Naive thymus-derived CD4-positive, alpha-beta T cell (primary cell): ENCODE measurements at regions of chr3 and their contacts with region 1.

Region 1: GRCh38 chr3:190696777-190697501 is 165.6 kb downstream of the GMNC start:
- DNase-seq: no peak
- ATAC-seq: no peak
- H3K4me3 ChIP-seq: no peak overlapping the region
- H3K4me3 Mint-ChIP-seq: no peak overlapping the region
- H3K27ac ChIP-seq: no peak overlapping the region
- H3K27ac Mint-ChIP-seq: no peak overlapping the region
- H3K4me1 ChIP-seq: no peaks in the 10 kb centered on the region
- H3K4me1 Mint-ChIP-seq: peaks cover 0 to 8% (median 0%) of the 10 kb centered on the region in 7 donors
- H3K27me3 ChIP-seq: no peaks in the 10 kb centered on the region
- H3K27me3 Mint-ChIP-seq: peaks cover 14 to 46% (median 22%) of the 10 kb centered on the region in 5 donors

Region 2: DNA sequence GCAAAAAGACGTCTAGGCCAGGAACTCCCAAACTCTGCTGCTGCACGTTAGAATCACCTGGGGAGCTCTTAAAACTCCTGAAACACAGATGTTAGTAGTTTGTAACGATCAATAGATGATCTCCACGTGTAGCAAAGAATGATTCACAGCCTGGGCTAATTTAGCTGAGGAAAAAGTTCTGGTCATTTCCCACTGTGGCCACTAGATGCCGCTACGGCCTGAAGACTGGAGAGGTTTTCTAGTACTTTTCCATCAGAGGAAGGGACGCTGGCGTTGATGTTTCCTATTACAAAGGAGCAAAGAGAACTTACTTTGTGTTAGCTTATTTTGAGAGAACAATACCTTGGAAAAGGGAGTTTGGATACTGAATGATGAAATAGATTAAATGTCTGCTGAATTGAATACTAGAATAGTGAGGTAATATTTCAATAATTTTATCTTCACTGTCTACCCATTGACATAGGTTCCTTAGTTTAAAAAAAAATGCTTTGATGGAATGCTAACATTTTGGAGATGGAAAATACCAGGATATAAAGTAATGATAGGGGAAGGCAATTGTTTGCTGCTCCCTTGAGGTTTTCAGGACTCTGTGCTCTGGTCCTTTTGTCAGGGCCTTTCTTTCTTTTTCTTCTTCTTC is 735.3 kb before region 1 on chr3:
- CTCF ChIA-PET with region 1: no interaction called
- POLR2A ChIA-PET with region 1: no interaction called
- intact Hi-C with region 1: loop called (anchors 2 to 5 kb)
- DNase-seq: peak in 8 of 9 donors; percentile 31 to 67 (median 44)
- ATAC-seq: peak; percentile 80
- H3K4me3 ChIP-seq: no peak overlapping the region
- H3K4me3 Mint-ChIP-seq: peak overlapping the region in 1 of 10 donors; percentile 29
- H3K27ac ChIP-seq: no peak overlapping the region
- H3K27ac Mint-ChIP-seq: no peak overlapping the region
- H3K4me1 ChIP-seq: no peaks in the 10 kb centered on the region
- H3K4me1 Mint-ChIP-seq: peaks cover 2 to 10% (median 6%) of the 10 kb centered on the region in 7 donors
- H3K27me3 ChIP-seq: no peaks in the 10 kb centered on the region
- H3K27me3 Mint-ChIP-seq: peaks cover 7 to 19% (median 15%) of the 10 kb centered on the region in 5 donors

Region 3: GRCh38 chr3:189967254-189967865 is 729.6 kb before region 1 on chr3:
- CTCF ChIA-PET with region 1: no interaction called
- POLR2A ChIA-PET with region 1: no interaction called
- intact Hi-C with region 1: loop called (anchors 2 to 5 kb)
- DNase-seq: peak in 6 of 9 donors; percentile 13 to 47 (median 33)
- ATAC-seq: no peak
- H3K4me3 ChIP-seq: no peak overlapping the region
- H3K4me3 Mint-ChIP-seq: no peak overlapping the region
- H3K27ac ChIP-seq: no peak overlapping the region
- H3K27ac Mint-ChIP-seq: no peak overlapping the region
- H3K4me1 ChIP-seq: no peaks in the 10 kb centered on the region
- H3K4me1 Mint-ChIP-seq: peaks cover 0 to 4% (median 0%) of the 10 kb centered on the region in 7 donors
- H3K27me3 ChIP-seq: no peaks in the 10 kb centered on the region
- H3K27me3 Mint-ChIP-seq: peaks cover 0 to 9% (median 5%) of the 10 kb centered on the region in 5 donors

Region 4: DNA sequence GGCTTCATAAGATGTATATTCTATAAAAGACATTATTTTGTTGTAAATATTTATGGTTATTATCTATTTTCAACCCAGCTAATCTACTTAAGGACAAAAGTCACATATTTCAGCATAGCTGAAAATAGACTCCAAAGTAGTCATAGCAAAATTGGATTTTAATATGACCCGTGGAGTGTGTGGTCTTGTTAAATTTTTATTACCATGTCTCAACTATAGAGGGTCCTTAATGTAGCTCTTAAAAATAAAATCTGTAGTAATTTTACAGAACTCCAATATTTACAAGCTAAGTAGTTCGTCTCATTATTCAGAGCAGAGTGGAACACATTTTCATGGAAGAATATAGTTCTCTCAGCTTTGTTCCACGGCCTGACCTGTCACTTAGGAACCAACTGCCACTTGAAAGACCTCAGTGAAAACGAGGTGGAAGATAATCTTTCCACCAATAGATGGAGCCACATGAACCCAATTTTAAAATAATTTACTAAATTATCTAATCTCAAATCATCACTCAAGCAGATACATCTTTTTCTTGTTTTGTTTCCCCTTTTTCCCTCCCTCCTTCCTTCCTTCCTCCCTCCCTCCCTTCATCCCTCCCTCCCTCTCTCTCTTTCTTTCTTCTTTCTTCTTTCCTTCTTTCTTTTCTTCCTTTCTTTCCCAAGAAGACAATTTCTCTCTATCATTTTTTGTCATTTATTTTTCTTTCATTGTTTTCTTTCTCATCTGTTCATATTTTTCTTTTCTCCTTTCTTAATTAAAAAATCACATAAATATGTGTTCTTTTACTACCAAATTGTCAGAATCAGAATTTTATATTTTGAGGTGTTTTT is 471.9 kb before region 1 on chr3:
- CTCF ChIA-PET with region 1: interaction called, 3 read pairs
- POLR2A ChIA-PET with region 1: no interaction called
- intact Hi-C with region 1: loop called in 1 of 2 experiments (anchors 5 kb)
- DNase-seq: peak in 6 of 9 donors; percentile 5 to 40 (median 26)
- ATAC-seq: no peak
- H3K4me3 ChIP-seq: no peak overlapping the region
- H3K4me3 Mint-ChIP-seq: no peak overlapping the region
- H3K27ac ChIP-seq: no peak overlapping the region
- H3K27ac Mint-ChIP-seq: no peak overlapping the region
- H3K4me1 ChIP-seq: no peaks in the 10 kb centered on the region
- H3K4me1 Mint-ChIP-seq: no peaks in the 10 kb centered on the region
- H3K27me3 ChIP-seq: no peaks in the 10 kb centered on the region
- H3K27me3 Mint-ChIP-seq: peaks cover 0 to 6% (median 5%) of the 10 kb centered on the region in 5 donors

Region 5: GRCh38 chr3:190384241-190384863 is 312.6 kb before region 1 on chr3:
- CTCF ChIA-PET with region 1: no interaction called
- POLR2A ChIA-PET with region 1: no interaction called
- intact Hi-C with region 1: loop called in 1 of 2 experiments (anchors 5 kb)
- DNase-seq: no peak
- ATAC-seq: no peak
- H3K4me3 ChIP-seq: no peak overlapping the region
- H3K4me3 Mint-ChIP-seq: no peak overlapping the region
- H3K27ac ChIP-seq: no peak overlapping the region
- H3K27ac Mint-ChIP-seq: no peak overlapping the region
- H3K4me1 ChIP-seq: no peaks in the 10 kb centered on the region
- H3K4me1 Mint-ChIP-seq: no peaks in the 10 kb centered on the region
- H3K27me3 ChIP-seq: peaks cover 0 to 1% of the 10 kb centered on the region in 2 donors
- H3K27me3 Mint-ChIP-seq: peaks cover 4 to 24% (median 12%) of the 10 kb centered on the region in 5 donors

Region 6: GRCh38 chr3:190566043-190566933 is 130.7 kb before region 1 on chr3:
- CTCF ChIA-PET with region 1: no interaction called
- POLR2A ChIA-PET with region 1: no interaction called
- intact Hi-C with region 1: no loop called
- DNase-seq: peak in 2 of 9 donors; percentile 9 to 73
- ATAC-seq: peak; percentile 89
- H3K4me3 ChIP-seq: no peak overlapping the region
- H3K4me3 Mint-ChIP-seq: peak overlapping the region in 1 of 10 donors; percentile 65
- H3K27ac ChIP-seq: no peak overlapping the region
- H3K27ac Mint-ChIP-seq: peak overlapping the region in 1 of 9 donors; percentile 78
- H3K4me1 ChIP-seq: no peaks in the 10 kb centered on the region
- H3K4me1 Mint-ChIP-seq: peaks cover 0 to 58% (median 0%) of the 10 kb centered on the region in 7 donors
- H3K27me3 ChIP-seq: no peaks in the 10 kb centered on the region
- H3K27me3 Mint-ChIP-seq: no peaks in the 10 kb centered on the region

Region 7: GRCh38 chr3:190585805-190586630 is 110.9 kb before region 1 on chr3:
- CTCF ChIA-PET with region 1: no interaction called
- POLR2A ChIA-PET with region 1: no interaction called
- intact Hi-C with region 1: loop called in 1 of 2 experiments (anchors 5 kb)
- DNase-seq: peak in 1 of 9 donors; percentile 56
- ATAC-seq: peak; percentile 88
- H3K4me3 ChIP-seq: no peak overlapping the region
- H3K4me3 Mint-ChIP-seq: peak overlapping the region in 4 of 10 donors; percentile 14 to 43 (median 26)
- H3K27ac ChIP-seq: no peak overlapping the region
- H3K27ac Mint-ChIP-seq: peak overlapping the region in 2 of 9 donors; percentile 6 to 84
- H3K4me1 ChIP-seq: peaks cover 4% of the 10 kb centered on the region in 2 donors
- H3K4me1 Mint-ChIP-seq: peaks cover 8 to 50% (median 21%) of the 10 kb centered on the region in 7 donors
- H3K27me3 ChIP-seq: no peaks in the 10 kb centered on the region
- H3K27me3 Mint-ChIP-seq: no peaks in the 10 kb centered on the region